Natural killer cell (primary cell): ENCODE measurements at regions of chr16 and their contacts with region 1.

Region 1: GRCh38 chr16:22297114-22297878 is at the start of gene POLR3E:
- DNase-seq: peak; percentile 99 to 100
- ATAC-seq: peak; percentile 86 to 98 (median 88)
- H3K4me3 ChIP-seq: peak within 1 kb of the TSS; percentile 93
- H3K4me3 Mint-ChIP-seq: peak within 1 kb of the TSS; percentile 95
- H3K27ac ChIP-seq: peak within 1 kb of the TSS; percentile 99
- H3K27ac Mint-ChIP-seq: peak within 1 kb of the TSS; percentile 92 to 98
- H3K4me1 ChIP-seq: peaks cover 33% of the 10 kb centered on the region
- H3K4me1 Mint-ChIP-seq: peaks cover 51 to 53% of the 10 kb centered on the region in 2 donors
- H3K27me3 ChIP-seq: no peaks in the 10 kb centered on the region
- H3K27me3 Mint-ChIP-seq: no peaks in the 10 kb centered on the region
- CTCF ChIP-seq: peak; percentile 90
- total RNA-seq, gene POLR3E: 95.0 to 116 (median 104) TPM

Region 2: GRCh38 chr16:21646721-21647561 is 650.4 kb before region 1 on chr16:
- intact Hi-C with region 1: loop called (anchors 10 kb)
- DNase-seq: peak; percentile 60 to 86
- ATAC-seq: peak; percentile 71 to 78 (median 78)
- H3K4me3 ChIP-seq: no peak overlapping the region
- H3K4me3 Mint-ChIP-seq: peak overlapping the region; percentile 72
- H3K27ac ChIP-seq: peak overlapping the region; percentile 84
- H3K27ac Mint-ChIP-seq: peak overlapping the region; percentile 88 to 95
- H3K4me1 ChIP-seq: peaks cover 43% of the 10 kb centered on the region
- H3K4me1 Mint-ChIP-seq: peaks cover 41 to 50% of the 10 kb centered on the region in 2 donors
- H3K27me3 ChIP-seq: no peaks in the 10 kb centered on the region
- H3K27me3 Mint-ChIP-seq: no peaks in the 10 kb centered on the region
- CTCF ChIP-seq: no peak

Region 3: DNA sequence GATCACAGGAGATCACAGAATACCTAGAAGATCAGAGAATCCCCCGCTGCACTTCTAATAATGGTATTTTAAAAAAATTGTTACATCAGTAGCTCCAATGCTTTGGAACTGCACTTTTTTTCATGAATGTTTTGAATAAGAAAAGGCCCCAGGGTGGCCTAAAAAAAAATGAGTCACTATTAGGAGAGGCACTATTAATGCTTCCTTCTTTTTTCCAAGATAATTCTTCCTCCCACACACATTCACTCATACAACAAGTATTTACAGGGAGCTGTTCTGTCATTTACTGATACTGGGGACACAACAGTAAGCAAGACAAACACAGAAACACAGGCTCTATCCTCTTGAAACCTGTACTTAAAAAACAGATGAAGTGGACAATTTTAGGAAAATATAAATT is 295.7 kb before region 1 on chr16:
- intact Hi-C with region 1: loop called (anchors 1 kb)
- DNase-seq: peak in 1 of 2 donors; percentile 14
- ATAC-seq: no peak
- H3K4me3 ChIP-seq: no peak overlapping the region
- H3K4me3 Mint-ChIP-seq: no peak overlapping the region
- H3K27ac ChIP-seq: no peak overlapping the region
- H3K27ac Mint-ChIP-seq: no peak overlapping the region
- H3K4me1 ChIP-seq: peaks cover 7% of the 10 kb centered on the region
- H3K4me1 Mint-ChIP-seq: peaks cover 10% of the 10 kb centered on the region in 2 donors
- H3K27me3 ChIP-seq: no peaks in the 10 kb centered on the region
- H3K27me3 Mint-ChIP-seq: peaks cover 0 to 9% of the 10 kb centered on the region in 2 donors
- CTCF ChIP-seq: no peak

Region 4: GRCh38 chr16:22190776-22191531 is 106.3 kb before region 1 on chr16:
- intact Hi-C with region 1: loop called (anchors 1 kb)
- DNase-seq: peak; percentile 99 to 100
- ATAC-seq: peak; percentile 65 to 88 (median 69)
- H3K4me3 ChIP-seq: peak overlapping the region; percentile 43
- H3K4me3 Mint-ChIP-seq: peak overlapping the region; percentile 94
- H3K27ac ChIP-seq: peak overlapping the region; percentile 99
- H3K27ac Mint-ChIP-seq: peak overlapping the region; percentile 91 to 98
- H3K4me1 ChIP-seq: peaks cover 63% of the 10 kb centered on the region
- H3K4me1 Mint-ChIP-seq: peaks cover 64 to 75% of the 10 kb centered on the region in 2 donors
- H3K27me3 ChIP-seq: no peaks in the 10 kb centered on the region
- H3K27me3 Mint-ChIP-seq: no peaks in the 10 kb centered on the region
- CTCF ChIP-seq: no peak

Region 5: DNA sequence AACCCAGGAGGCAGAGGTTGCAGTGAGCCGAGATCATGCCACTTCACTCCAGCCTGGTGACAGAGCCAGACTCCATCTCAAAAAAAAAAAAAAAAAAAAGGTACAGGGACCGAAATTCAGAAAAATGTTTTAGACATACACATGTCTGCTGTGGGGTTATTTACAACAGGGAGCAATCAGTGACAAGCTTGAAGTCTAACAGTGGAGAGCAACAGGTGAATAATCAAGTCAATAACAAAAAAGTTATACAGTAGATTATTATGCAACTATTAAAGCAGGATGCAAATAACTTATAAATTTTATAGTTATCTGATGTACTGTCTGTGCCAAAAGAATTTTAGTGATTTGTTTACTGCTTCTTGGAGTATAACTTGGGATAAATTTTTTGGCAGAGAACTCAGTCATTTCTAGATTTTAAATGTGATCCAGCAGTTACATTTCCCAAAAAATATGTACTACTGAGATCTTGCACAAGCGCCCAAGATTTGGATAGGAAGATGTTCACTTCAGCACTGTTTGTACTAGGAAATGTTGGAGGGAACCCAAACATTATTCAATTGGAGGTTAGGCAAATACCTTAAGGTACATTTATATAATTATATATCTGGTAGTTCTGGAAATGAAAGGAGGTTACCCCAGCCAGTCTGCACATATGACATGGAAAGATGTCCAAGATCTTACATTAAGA is 57.1 kb before region 1 on chr16:
- intact Hi-C with region 1: loop called (anchors 10 kb)
- DNase-seq: no peak
- ATAC-seq: no peak
- H3K4me3 ChIP-seq: no peak overlapping the region
- H3K4me3 Mint-ChIP-seq: no peak overlapping the region
- H3K27ac ChIP-seq: peak overlapping the region; percentile 59
- H3K27ac Mint-ChIP-seq: peak overlapping the region; percentile 91 to 94
- H3K4me1 ChIP-seq: peaks cover 11% of the 10 kb centered on the region
- H3K4me1 Mint-ChIP-seq: peaks cover 7% of the 10 kb centered on the region in 2 donors
- H3K27me3 ChIP-seq: no peaks in the 10 kb centered on the region
- H3K27me3 Mint-ChIP-seq: no peaks in the 10 kb centered on the region
- CTCF ChIP-seq: no peak